ENCODE measurements at regions of chrX and their contacts with region 1.

Region 1: GRCh38 chrX:78945186-78945912 is at the start of gene P2RY10:
- DNase-seq: no peak
- ATAC-seq: peak; percentile 78
- H3K4me3 Mint-ChIP-seq: peak within 1 kb of the TSS; percentile 97
- H3K27ac Mint-ChIP-seq: peak within 1 kb of the TSS; percentile 98
- H3K4me1 Mint-ChIP-seq: peaks cover 63% of the 10 kb centered on the region
- H3K27me3 Mint-ChIP-seq: no peaks in the 10 kb centered on the region
- CTCF ChIP-seq: no peak
- total RNA-seq, gene P2RY10: 72.7 and 80.5 TPM in 2 replicates

Region 2: DNA sequence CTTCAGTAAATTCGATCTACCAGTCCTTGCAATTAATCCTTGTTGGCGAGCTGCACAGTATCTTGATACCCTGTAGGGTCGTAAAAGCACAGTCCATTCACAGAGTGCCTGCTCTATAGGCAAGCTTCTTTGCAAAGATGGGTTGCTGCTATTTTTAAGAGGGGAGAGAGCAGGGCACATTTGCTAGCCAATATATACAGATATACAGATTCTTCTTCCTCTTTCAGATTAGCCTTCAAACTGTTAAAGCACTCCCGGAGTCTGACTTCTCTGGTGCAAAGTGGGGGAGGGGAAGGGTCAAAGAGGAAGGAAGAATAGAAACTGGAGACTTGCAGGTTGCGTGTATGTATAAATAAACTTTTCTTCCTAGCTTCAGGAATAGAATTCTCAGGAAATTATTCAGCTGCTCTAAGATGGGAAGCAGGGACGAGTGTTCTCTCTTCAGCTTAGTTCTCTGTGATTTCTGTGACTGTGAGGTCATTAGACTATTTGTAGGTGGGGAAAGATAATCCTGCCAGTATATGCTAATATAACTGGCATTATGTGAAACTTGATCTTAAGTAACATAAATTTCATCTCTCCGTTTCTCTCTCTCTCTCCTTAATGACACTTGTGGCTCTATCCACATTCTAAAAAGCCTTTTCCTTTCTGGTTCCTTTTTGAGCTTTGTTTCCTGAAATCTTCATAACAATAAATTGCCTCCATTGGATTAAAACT is 617.8 kb before region 1 on chrX and contains the start of gene CYSLTR1:
- CTCF ChIA-PET with region 1: no interaction called
- POLR2A ChIA-PET with region 1: interaction called, 4 read pairs
- intact Hi-C with region 1: loop called (anchors 5 kb)
- DNase-seq: no peak
- ATAC-seq: peak; percentile 64
- H3K4me3 Mint-ChIP-seq: peak within 1 kb of the TSS; percentile 89
- H3K27ac Mint-ChIP-seq: peak within 1 kb of the TSS; percentile 94
- H3K4me1 Mint-ChIP-seq: peaks cover 74% of the 10 kb centered on the region
- H3K27me3 Mint-ChIP-seq: no peaks in the 10 kb centered on the region
- CTCF ChIP-seq: no peak
- total RNA-seq, gene CYSLTR1: 20.5 and 20.7 TPM in 2 replicates

Region 3: DNA sequence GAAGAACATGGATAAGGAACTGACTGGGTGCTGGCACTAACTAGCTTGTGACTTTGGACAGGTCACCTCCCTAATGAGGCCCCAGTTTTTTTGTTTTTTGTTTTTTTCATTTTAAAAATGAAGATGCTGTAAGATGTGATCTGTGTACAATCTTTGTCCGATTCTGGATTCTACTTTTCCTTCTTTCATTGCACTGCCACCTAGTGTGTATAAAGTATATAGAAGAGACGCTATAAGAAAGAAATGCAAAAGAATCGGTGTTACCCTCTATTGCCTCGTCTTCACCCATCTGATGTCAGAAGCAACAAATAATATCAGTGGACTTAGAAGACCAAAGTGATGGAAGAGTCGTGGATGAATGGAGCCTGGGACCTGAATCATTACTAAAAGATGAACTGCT is 58.8 kb before region 1 on chrX:
- CTCF ChIA-PET with region 1: interaction called, 3 read pairs
- POLR2A ChIA-PET with region 1: no interaction called
- intact Hi-C with region 1: loop called (anchors 2 kb)
- DNase-seq: no peak
- ATAC-seq: no peak
- H3K4me3 Mint-ChIP-seq: no peak overlapping the region
- H3K27ac Mint-ChIP-seq: no peak overlapping the region
- H3K4me1 Mint-ChIP-seq: peaks cover 6% of the 10 kb centered on the region
- H3K27me3 Mint-ChIP-seq: no peaks in the 10 kb centered on the region
- CTCF ChIP-seq: no peak

Region 4: GRCh38 chrX:79081895-79082512 is 136.7 kb after region 1 on chrX:
- CTCF ChIA-PET with region 1: interaction called, 12 read pairs
- POLR2A ChIA-PET with region 1: interaction called, 5 read pairs
- intact Hi-C with region 1: loop called (anchors 5 kb)
- DNase-seq: no peak
- ATAC-seq: peak; percentile 77
- H3K4me3 Mint-ChIP-seq: peak overlapping the region; percentile 0
- H3K27ac Mint-ChIP-seq: peak overlapping the region; percentile 77
- H3K4me1 Mint-ChIP-seq: peaks cover 12% of the 10 kb centered on the region
- H3K27me3 Mint-ChIP-seq: no peaks in the 10 kb centered on the region
- CTCF ChIP-seq: no peak

Region 5: DNA sequence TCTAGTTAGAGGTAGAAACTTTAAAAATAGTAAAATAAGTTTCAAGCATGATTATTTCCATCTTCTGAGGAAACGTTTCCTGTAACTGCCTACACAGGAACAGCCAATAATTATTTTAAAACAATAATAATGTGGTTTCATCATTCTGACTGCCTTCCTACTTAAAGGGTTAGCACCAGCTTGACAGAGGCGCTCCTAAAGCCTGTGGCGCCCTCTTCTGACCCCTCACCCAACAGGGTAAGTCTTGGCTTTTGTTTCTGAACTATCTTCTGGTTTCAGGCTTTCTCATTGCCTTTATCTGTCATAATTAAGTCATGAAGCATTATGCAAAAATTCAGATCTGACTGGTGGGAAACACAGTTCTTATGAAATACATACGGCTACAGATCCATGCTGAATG is 325.1 kb after region 1 on chrX:
- CTCF ChIA-PET with region 1: no interaction called
- POLR2A ChIA-PET with region 1: interaction called, 3 read pairs
- intact Hi-C with region 1: loop called (anchors 2 kb)
- DNase-seq: peak; percentile 37
- ATAC-seq: peak; percentile 95
- H3K4me3 Mint-ChIP-seq: no peak overlapping the region
- H3K27ac Mint-ChIP-seq: peak overlapping the region; percentile 79
- H3K4me1 Mint-ChIP-seq: peaks cover 37% of the 10 kb centered on the region
- H3K27me3 Mint-ChIP-seq: no peaks in the 10 kb centered on the region
- CTCF ChIP-seq: no peak